H1 (cell line): ENCODE measurements at regions of chr12 and their contacts with region 1.

Region 1: GRCh38 chr12:5022465-5023061 is 21.1 kb upstream of the KCNA5 start:
- DNase-seq: peak; percentile 57 to 69
- H3K4me3 ChIP-seq: no peak overlapping the region
- H3K27ac ChIP-seq: no peak overlapping the region
- H3K4me1 ChIP-seq: peaks cover 0 to 6% (median 2%) of the 10 kb centered on the region in 4 experiments; a peak in 4 of 7 replicates
- H3K27me3 ChIP-seq: no peaks in the 10 kb centered on the region; a peak in 1 of 7 replicates
- CTCF ChIP-seq: peak; percentile 91 to 98 (median 97)
- EP300 ChIP-seq: no peak
- POLR2A ChIP-seq: no peak
- RAD21 ChIP-seq: peak; percentile 96 to 98

Region 2: DNA sequence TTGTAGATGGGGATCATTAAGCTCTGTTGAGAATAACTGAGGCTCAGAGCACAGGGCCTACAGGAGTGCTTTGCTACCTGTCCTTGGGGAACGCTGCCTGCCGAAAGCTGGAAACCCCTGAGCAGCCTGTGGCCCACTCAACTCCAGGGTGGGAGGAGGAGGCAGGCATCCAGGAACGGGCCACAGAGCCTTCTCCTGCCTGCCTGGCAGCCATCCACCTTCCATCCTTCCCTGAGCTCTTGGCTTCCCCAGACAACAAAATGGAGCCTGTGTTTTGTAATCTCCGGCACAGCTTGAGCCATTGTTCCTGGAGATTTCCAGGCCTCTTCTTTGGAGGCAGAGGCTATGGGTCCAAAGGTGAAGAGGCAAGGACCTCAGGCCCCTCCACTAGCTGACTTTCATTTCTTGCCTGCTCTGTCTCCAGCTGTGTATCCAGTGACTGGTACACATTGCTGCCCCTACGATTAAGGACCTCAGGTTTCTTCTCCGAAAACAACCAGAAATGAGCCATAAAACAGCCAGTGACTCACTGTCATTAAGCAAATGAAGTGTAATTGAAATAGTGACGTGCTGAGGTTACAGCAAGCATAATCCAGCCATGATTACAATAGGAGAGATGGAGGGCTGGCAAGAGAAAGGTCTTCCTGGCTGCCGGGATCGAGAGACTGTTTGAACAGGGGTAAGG is 35.3 kb before region 1 on chr12:
- CTCF ChIA-PET with region 1: interaction called, 10 read pairs
- POLR2A ChIA-PET with region 1: interaction called, 3 read pairs
- DNase-seq: no peak
- H3K4me3 ChIP-seq: no peak overlapping the region
- H3K27ac ChIP-seq: no peak overlapping the region
- H3K4me1 ChIP-seq: peaks cover 0 to 7% (median 6%) of the 10 kb centered on the region in 4 experiments; a peak in 6 of 7 replicates
- H3K27me3 ChIP-seq: no peaks in the 10 kb centered on the region; a peak in 2 of 7 replicates
- CTCF ChIP-seq: no peak
- EP300 ChIP-seq: no peak
- POLR2A ChIP-seq: no peak
- RAD21 ChIP-seq: no peak

Region 3: GRCh38 chr12:5034603-5035002 is 12.0 kb after region 1 on chr12:
- CTCF ChIA-PET with region 1: interaction called, 29 read pairs
- POLR2A ChIA-PET with region 1: no interaction called
- DNase-seq: no peak
- H3K4me3 ChIP-seq: no peak overlapping the region
- H3K27ac ChIP-seq: no peak overlapping the region
- H3K4me1 ChIP-seq: peaks cover 0 to 4% (median 1%) of the 10 kb centered on the region in 4 experiments; a peak in 1 of 7 replicates
- H3K27me3 ChIP-seq: no peaks in the 10 kb centered on the region; a peak in 1 of 7 replicates
- CTCF ChIP-seq: no peak
- EP300 ChIP-seq: no peak
- POLR2A ChIP-seq: no peak
- RAD21 ChIP-seq: no peak

Region 4: DNA sequence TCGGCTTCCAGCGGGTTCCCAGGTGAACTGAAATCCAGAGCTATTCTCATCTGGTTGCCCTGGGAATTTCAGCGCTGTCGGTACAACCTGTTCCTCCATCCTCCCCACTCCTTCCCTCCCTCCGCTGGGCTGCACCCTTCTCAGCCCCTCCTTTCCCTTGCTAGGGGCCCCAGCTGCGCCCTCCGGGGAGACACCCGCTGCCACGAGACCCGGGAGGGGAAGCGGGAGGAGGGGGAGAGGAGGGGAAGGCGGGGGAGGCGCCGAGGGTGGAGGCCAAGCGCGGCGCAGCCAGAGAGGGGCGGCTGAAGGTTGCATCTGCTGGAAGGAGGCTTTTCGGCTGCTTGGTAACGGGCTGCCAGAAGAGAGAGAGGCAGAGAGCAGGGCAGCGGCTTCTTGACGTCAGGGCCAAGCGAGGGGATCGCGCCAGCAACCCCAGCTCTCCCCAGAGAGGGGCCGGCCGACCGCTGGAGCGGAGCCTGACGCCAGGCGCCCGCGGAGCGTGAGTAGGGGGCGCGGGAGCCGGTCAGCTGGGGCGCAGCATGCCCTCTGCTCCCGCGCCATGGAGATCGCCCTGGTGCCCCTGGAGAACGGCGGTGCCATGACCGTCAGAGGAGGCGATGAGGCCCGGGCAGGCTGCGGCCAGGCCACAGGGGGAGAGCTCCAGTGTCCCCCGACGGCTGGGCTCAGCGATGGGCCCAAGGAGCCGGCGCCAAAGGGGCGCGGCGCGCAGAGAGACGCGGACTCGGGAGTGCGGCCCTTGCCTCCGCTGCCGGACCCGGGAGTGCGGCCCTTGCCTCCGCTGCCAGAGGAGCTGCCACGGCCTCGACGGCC is 21.2 kb after region 1 on chr12 and contains the start of gene KCNA5:
- CTCF ChIA-PET with region 1: interaction called, 35 read pairs
- POLR2A ChIA-PET with region 1: interaction called, 3 read pairs
- DNase-seq: peak; percentile 13 to 77
- H3K4me3 ChIP-seq: peak within 1 kb of the TSS; percentile 48 to 65 (median 58)
- H3K27ac ChIP-seq: no peak within 1 kb of the TSS
- H3K4me1 ChIP-seq: peaks cover 3 to 9% (median 4%) of the 10 kb centered on the region in 4 experiments
- H3K27me3 ChIP-seq: peaks cover 27 to 57% (median 45%) of the 10 kb centered on the region in 4 experiments
- CTCF ChIP-seq: no peak
- EP300 ChIP-seq: no peak
- POLR2A ChIP-seq: no peak
- RAD21 ChIP-seq: no peak
- total RNA-seq, gene KCNA5: 0.11 and 0.20 TPM in 2 replicates